ENCODE measurements at regions of chr14 and their contacts with region 1.

Region 1: GRCh38 chr14:97346675-97347074 is 549.5 kb downstream of the VRK1 start:
- DNase-seq: no peak
- H3K4me3 ChIP-seq: no peak overlapping the region
- H3K27ac ChIP-seq: no peak overlapping the region
- H3K4me1 ChIP-seq: no peaks in the 10 kb centered on the region
- H3K27me3 ChIP-seq: no peaks in the 10 kb centered on the region
- CTCF ChIP-seq: no peak
- POLR2A ChIP-seq: no peak

Region 2: DNA sequence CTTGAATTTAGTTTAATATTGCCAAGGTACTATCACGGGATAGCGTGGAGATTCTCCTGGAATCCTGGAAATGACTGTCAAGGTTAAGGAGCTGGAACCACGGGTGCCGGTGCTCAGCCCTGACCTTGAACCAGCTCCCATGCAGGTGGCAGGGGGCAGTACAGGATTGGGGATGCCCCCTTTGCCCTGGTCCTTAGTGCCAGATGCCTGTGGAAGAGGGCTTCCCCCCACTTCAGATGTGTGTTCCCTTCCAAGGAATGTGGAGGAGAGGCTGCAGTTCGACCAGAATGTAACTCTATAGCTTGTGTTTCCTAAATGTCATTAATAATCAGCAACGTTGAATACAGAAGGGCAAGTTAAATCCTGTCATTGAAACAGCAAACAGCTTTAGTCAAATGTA is 290.6 kb before region 1 on chr14:
- intact Hi-C with region 1: no loop called
- DNase-seq: peak in 1 of 2 donors; percentile 8
- H3K4me3 ChIP-seq: no peak overlapping the region
- H3K27ac ChIP-seq: no peak overlapping the region
- H3K4me1 ChIP-seq: no peaks in the 10 kb centered on the region
- H3K27me3 ChIP-seq: no peaks in the 10 kb centered on the region
- CTCF ChIP-seq: no peak
- POLR2A ChIP-seq: no peak

Region 3: GRCh38 chr14:97276573-97276972 is 70.1 kb before region 1 on chr14:
- intact Hi-C with region 1: no loop called
- DNase-seq: no peak
- H3K4me3 ChIP-seq: no peak overlapping the region
- H3K27ac ChIP-seq: no peak overlapping the region
- H3K4me1 ChIP-seq: no peaks in the 10 kb centered on the region
- H3K27me3 ChIP-seq: no peaks in the 10 kb centered on the region
- CTCF ChIP-seq: no peak
- POLR2A ChIP-seq: no peak

Region 4: DNA sequence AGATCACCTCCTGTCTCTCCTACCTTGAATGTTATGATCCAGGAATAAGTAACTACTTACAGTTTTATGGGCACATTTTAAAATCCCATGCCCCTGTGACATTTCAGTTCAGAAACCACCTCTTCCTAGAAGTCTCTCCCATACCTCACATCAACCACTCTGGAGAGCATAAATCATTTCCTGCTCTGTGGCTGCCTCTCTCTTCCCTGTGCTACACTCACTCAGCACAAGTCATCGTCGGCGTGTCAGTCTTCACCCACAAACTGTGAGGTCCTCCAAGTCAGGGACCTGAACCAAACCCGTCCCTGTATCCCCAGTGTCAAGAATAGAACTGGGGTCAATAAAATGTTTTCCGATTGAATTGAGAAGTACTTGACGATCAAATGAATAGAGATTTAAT is 1062.0 kb after region 1 on chr14:
- intact Hi-C with region 1: loop called (anchors 10 kb)
- DNase-seq: no peak
- H3K4me3 ChIP-seq: no peak overlapping the region
- H3K27ac ChIP-seq: no peak overlapping the region
- H3K4me1 ChIP-seq: no peaks in the 10 kb centered on the region
- H3K27me3 ChIP-seq: no peaks in the 10 kb centered on the region
- CTCF ChIP-seq: no peak
- POLR2A ChIP-seq: no peak

Measured in thyroid gland (tissue), 4 donors.